Aorta (tissue), 5 donors: ENCODE measurements at regions of chr10 and their contacts with region 1.

Region 1: DNA sequence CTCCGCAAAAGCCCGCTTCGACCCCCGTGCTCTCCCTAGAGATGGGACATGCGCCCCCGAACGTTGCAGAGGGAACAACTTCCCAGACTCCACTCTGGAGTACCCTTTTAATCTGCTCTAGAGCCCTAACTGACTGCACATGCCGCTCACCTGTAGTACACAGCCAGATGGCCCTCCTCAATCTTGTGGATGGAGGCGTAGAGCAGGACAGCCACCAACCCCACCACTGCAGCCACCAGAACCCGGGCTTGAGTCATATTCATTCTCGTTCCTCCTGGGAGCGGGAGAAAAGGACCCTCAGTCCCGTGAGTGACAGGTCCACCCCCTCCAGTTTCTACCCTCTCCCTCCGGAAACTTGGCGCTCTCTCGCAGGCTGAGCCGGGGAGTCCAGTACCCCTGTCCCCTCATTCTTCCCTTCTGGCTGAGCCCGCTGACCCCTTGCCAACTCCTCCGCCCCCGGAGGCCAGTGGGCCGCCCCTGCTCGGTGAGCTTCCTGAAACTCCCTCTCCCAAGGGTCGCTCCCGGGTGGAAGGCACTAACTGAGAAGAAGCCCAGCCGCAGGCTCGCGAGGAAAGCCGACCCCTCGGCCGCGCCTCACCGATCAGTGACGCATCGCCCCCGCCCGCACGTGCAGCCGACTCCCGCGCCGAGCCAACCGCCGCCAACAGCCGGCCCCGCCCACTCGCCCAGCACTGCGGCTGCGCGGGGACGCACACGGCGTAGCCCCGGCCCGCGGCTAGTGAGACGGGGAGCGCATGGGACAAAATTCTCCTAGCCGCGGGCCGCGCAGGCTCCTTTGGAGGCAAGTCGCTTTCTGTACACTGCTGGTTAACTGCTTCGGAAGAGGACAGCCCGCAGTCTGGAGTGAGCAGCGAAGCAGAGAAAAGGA is at the start of gene ERLIN1:
- DNase-seq: peak; percentile 95 to 98
- ATAC-seq: peak; percentile 99
- H3K4me3 ChIP-seq: peak within 1 kb of the TSS; percentile 43 to 74
- H3K27ac ChIP-seq: peak within 1 kb of the TSS in 1 of 2 donors; percentile 46
- H3K4me1 ChIP-seq: peaks cover 0 to 1% of the 10 kb centered on the region in 2 donors
- H3K27me3 ChIP-seq: no peaks in the 10 kb centered on the region
- total RNA-seq, gene ERLIN1: 12.5 to 20.7 TPM

Region 2: DNA sequence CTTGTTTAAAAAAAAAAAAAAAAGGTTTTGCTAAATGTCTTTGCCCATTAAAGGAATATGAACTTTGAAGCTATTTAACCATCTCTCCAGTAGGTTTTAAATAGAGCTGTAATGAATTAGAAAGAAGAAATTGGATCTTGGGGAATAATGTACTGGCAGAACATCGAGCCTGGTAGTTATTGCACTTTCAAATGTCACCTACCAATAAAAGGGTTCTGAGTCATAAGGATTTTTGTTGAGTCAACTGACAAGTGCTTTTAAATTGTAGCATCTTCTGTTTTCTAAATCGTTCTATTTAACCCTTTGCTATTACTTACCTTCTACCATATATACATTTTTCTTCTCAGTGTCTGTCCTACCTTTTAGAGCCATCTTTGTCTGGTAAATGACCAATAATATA is 442.9 kb before region 1 on chr10:
- intact Hi-C with region 1: loop called in 1 of 2 experiments (anchors 10 kb)
- DNase-seq: no peak
- ATAC-seq: no peak
- H3K4me3 ChIP-seq: no peak overlapping the region
- H3K27ac ChIP-seq: peak overlapping the region in 1 of 2 donors; percentile 12
- H3K4me1 ChIP-seq: no peaks in the 10 kb centered on the region
- H3K27me3 ChIP-seq: no peaks in the 10 kb centered on the region

Region 3: DNA sequence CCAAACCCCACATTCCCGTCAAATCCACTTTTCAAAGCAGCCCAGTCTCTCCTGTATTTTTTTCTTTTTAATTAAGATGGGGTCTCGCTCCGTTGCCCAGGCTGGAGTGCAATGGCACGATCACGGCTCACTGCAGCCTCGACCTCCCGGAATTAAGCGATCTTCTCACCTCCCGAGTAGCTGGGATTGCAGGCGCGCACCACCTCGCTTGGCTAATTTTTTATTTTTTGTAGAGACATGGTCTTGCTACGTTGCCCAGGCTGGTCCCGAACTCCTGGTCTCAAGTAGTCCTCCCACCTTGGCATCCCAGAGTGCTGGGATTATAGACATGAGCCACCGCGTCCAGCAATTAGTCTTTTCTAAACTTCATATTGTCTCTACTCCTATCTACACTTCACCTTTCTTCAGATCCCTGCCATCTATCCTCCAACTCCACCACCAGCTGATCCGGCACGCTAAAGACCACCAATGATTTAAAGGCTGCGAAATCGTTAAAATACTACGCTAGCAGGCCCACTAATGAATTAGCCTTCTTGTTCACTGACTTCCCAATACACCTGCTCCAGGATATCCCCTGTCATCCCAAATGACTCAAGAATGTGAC is 44.3 kb after region 1 on chr10:
- intact Hi-C with region 1: loop called in 1 of 2 experiments (anchors 5 kb)
- DNase-seq: no peak
- ATAC-seq: peak; percentile 23
- H3K4me3 ChIP-seq: peak overlapping the region; percentile 23 to 74
- H3K27ac ChIP-seq: peak overlapping the region in 1 of 2 donors; percentile 9
- H3K4me1 ChIP-seq: peaks cover 0 to 2% of the 10 kb centered on the region in 2 donors
- H3K27me3 ChIP-seq: no peaks in the 10 kb centered on the region